ENCODE measurements at regions of chr11 and their contacts with region 1.

Region 1: GRCh38 chr11:46308631-46309419 is 31.4 kb downstream of the CREB3L1 start:
- DNase-seq: peak; percentile 68
- H3K4me3 Mint-ChIP-seq: no peak overlapping the region
- H3K27ac Mint-ChIP-seq: no peak overlapping the region
- H3K4me1 Mint-ChIP-seq: peaks cover 17% of the 10 kb centered on the region
- H3K27me3 Mint-ChIP-seq: no peaks in the 10 kb centered on the region
- CTCF ChIP-seq: peak; percentile 86

Region 2: GRCh38 chr11:46127150-46127638 is 181.6 kb before region 1 on chr11:
- CTCF ChIA-PET with region 1: interaction called, 11 read pairs
- POLR2A ChIA-PET with region 1: no interaction called
- intact Hi-C with region 1: loop called (anchors 1 kb)
- DNase-seq: peak; percentile 94
- H3K4me3 Mint-ChIP-seq: no peak overlapping the region
- H3K27ac Mint-ChIP-seq: no peak overlapping the region
- H3K4me1 Mint-ChIP-seq: peaks cover 8% of the 10 kb centered on the region
- H3K27me3 Mint-ChIP-seq: no peaks in the 10 kb centered on the region
- CTCF ChIP-seq: peak; percentile 50

Region 3: GRCh38 chr11:46247664-46248063 is 61.2 kb before region 1 on chr11:
- CTCF ChIA-PET with region 1: interaction called, 374 read pairs
- POLR2A ChIA-PET with region 1: interaction called, 26 read pairs
- intact Hi-C with region 1: loop called (anchors 1 kb)
- DNase-seq: peak; percentile 82
- H3K4me3 Mint-ChIP-seq: no peak overlapping the region
- H3K27ac Mint-ChIP-seq: peak overlapping the region; percentile 90
- H3K4me1 Mint-ChIP-seq: peaks cover 31% of the 10 kb centered on the region
- H3K27me3 Mint-ChIP-seq: no peaks in the 10 kb centered on the region
- CTCF ChIP-seq: peak; percentile 22

Region 4: GRCh38 chr11:46295312-46296058 is 13.3 kb before region 1 on chr11:
- CTCF ChIA-PET with region 1: interaction called, 19 read pairs
- POLR2A ChIA-PET with region 1: no interaction called
- intact Hi-C with region 1: no loop called
- DNase-seq: peak; percentile 72
- H3K4me3 Mint-ChIP-seq: peak overlapping the region; percentile 71
- H3K27ac Mint-ChIP-seq: no peak overlapping the region
- H3K4me1 Mint-ChIP-seq: peaks cover 20% of the 10 kb centered on the region
- H3K27me3 Mint-ChIP-seq: no peaks in the 10 kb centered on the region
- CTCF ChIP-seq: no peak

Region 5: DNA sequence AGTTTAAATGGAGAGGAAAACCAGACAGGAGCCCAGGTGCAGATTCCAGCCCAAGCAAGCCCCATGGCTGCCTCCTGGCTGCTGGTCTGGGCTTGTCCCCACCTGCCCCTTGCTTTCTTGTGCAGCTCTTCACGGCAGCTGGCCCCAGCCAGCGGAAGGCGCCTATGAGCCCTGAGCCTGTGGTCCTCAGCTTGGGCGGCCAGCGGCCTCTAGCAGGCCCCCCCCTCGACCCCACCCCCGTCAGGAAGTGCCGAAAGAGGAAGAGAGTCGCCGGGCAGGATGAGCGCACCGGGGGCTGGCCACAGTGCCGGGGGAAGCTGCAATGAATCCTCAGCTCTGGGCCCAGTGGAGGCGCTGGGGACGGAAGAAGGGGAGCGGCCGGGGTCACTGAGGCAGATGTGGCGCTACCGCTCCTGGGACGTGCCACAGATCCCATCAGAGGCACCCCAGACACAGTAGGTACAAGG is 36.3 kb after region 1 on chr11:
- CTCF ChIA-PET with region 1: interaction called, 12 read pairs
- POLR2A ChIA-PET with region 1: interaction called, 4 read pairs
- intact Hi-C with region 1: no loop called
- DNase-seq: peak; percentile 49
- H3K4me3 Mint-ChIP-seq: peak overlapping the region; percentile 47
- H3K27ac Mint-ChIP-seq: peak overlapping the region; percentile 9
- H3K4me1 Mint-ChIP-seq: peaks cover 32% of the 10 kb centered on the region
- H3K27me3 Mint-ChIP-seq: no peaks in the 10 kb centered on the region
- CTCF ChIP-seq: no peak

Measured in MCF 10A (cell line).